Left ventricle myocardium inferior (tissue), 1 donor: ENCODE measurements at regions of chr6 and their contacts with region 1.

Region 1: GRCh38 chr6:13795041-13795750 is 19.2 kb downstream of the MCUR1 start:
- DNase-seq: peak; percentile 75
- H3K4me3 ChIP-seq: no peak overlapping the region
- H3K27ac ChIP-seq: no peak overlapping the region
- H3K4me1 ChIP-seq: peaks cover 12% of the 10 kb centered on the region
- H3K27me3 ChIP-seq: no peaks in the 10 kb centered on the region
- CTCF ChIP-seq: peak; percentile 99

Region 2: GRCh38 chr6:13681305-13682061 is 113.7 kb before region 1 on chr6:
- intact Hi-C with region 1: no loop called
- DNase-seq: no peak
- H3K4me3 ChIP-seq: no peak overlapping the region
- H3K27ac ChIP-seq: no peak overlapping the region
- H3K4me1 ChIP-seq: peaks cover 43% of the 10 kb centered on the region
- H3K27me3 ChIP-seq: no peaks in the 10 kb centered on the region
- CTCF ChIP-seq: no peak

Region 3: GRCh38 chr6:13908955-13909381 is 113.8 kb after region 1 on chr6:
- intact Hi-C with region 1: no loop called
- DNase-seq: no peak
- H3K4me3 ChIP-seq: no peak overlapping the region
- H3K27ac ChIP-seq: no peak overlapping the region
- H3K4me1 ChIP-seq: no peaks in the 10 kb centered on the region
- H3K27me3 ChIP-seq: peaks cover 50% of the 10 kb centered on the region
- CTCF ChIP-seq: peak; percentile 87

Region 4: GRCh38 chr6:14059791-14060444 is 264.7 kb after region 1 on chr6:
- intact Hi-C with region 1: loop called (anchors 10 kb)
- DNase-seq: peak; percentile 41
- H3K4me3 ChIP-seq: no peak overlapping the region
- H3K27ac ChIP-seq: no peak overlapping the region
- H3K4me1 ChIP-seq: peaks cover 6% of the 10 kb centered on the region
- H3K27me3 ChIP-seq: peaks cover 43% of the 10 kb centered on the region
- CTCF ChIP-seq: no peak